Naive thymus-derived CD4-positive, alpha-beta T cell (primary cell): ENCODE measurements at regions of chr11 and their contacts with region 1.

Region 1: DNA sequence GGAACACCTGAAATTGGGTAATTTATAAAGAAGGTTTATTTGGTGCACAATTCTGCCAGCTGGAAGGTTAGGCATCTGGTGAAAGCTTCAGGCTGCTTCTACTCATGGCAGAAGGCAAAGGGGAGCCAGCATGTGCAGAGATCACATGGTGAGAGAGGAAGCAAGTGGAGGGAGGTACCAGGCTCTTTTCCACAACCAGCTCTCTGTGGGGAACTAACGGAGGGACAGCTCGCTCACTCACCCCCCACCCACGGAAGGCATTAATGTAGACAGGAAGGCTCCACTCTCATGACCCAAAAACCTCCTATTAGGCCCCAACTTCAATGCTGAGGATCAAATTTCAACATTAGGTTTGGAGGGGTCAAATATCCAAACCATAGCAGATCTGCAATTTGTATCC is 75.6 kb upstream of the ARHGAP32 start:
- DNase-seq: no peak
- ATAC-seq: no peak
- H3K4me3 ChIP-seq: no peak overlapping the region
- H3K4me3 Mint-ChIP-seq: no peak overlapping the region
- H3K27ac ChIP-seq: no peak overlapping the region
- H3K27ac Mint-ChIP-seq: peak overlapping the region in 3 of 9 donors; percentile 28 to 58 (median 34)
- H3K4me1 ChIP-seq: no peaks in the 10 kb centered on the region
- H3K4me1 Mint-ChIP-seq: peaks cover 0 to 32% (median 9%) of the 10 kb centered on the region in 7 donors
- H3K27me3 ChIP-seq: no peaks in the 10 kb centered on the region
- H3K27me3 Mint-ChIP-seq: peaks cover under 1 to 10% (median 7%) of the 10 kb centered on the region in 5 donors

Region 2: DNA sequence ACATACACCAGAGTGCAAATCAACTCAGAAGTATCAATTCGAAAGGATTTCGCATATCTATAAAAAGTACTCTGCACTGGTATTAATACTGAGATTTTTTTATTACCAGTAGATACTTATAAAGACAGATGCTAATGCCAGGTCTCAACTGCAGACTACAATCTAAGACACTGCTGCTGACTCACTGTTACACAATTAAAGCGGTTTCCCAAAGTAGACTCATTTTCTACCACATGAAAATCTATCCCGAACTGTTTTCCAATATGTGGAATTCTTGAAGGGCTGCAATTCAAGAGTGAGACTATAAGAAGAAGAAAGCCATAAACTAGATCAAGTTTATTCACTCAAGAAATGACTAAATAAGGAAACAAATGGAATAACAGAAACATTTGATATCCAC is 18.4 kb before region 1 on chr11:
- CTCF ChIA-PET with region 1: no interaction called
- POLR2A ChIA-PET with region 1: no interaction called
- intact Hi-C with region 1: loop called in 1 of 2 experiments (anchors 2 kb)
- DNase-seq: no peak
- ATAC-seq: no peak
- H3K4me3 ChIP-seq: no peak overlapping the region
- H3K4me3 Mint-ChIP-seq: no peak overlapping the region
- H3K27ac ChIP-seq: no peak overlapping the region
- H3K27ac Mint-ChIP-seq: no peak overlapping the region
- H3K4me1 ChIP-seq: peaks cover 0 to 5% of the 10 kb centered on the region in 2 donors
- H3K4me1 Mint-ChIP-seq: peaks cover 2 to 32% (median 29%) of the 10 kb centered on the region in 7 donors
- H3K27me3 ChIP-seq: no peaks in the 10 kb centered on the region
- H3K27me3 Mint-ChIP-seq: no peaks in the 10 kb centered on the region

Region 3: GRCh38 chr11:130553306-130553705 is 1285.6 kb after region 1 on chr11:
- CTCF ChIA-PET with region 1: no interaction called
- POLR2A ChIA-PET with region 1: no interaction called
- intact Hi-C with region 1: no loop called
- DNase-seq: no peak
- ATAC-seq: no peak
- H3K4me3 ChIP-seq: no peak overlapping the region
- H3K4me3 Mint-ChIP-seq: no peak overlapping the region
- H3K27ac ChIP-seq: no peak overlapping the region
- H3K27ac Mint-ChIP-seq: no peak overlapping the region
- H3K4me1 ChIP-seq: no peaks in the 10 kb centered on the region
- H3K4me1 Mint-ChIP-seq: no peaks in the 10 kb centered on the region
- H3K27me3 ChIP-seq: no peaks in the 10 kb centered on the region
- H3K27me3 Mint-ChIP-seq: peaks cover 0 to 25% (median 16%) of the 10 kb centered on the region in 5 donors